ENCODE measurements at regions of chr1 and their contacts with region 1.

Region 1: GRCh38 chr1:22861764-22862440 is 110.8 kb downstream of the LACTBL1 start:
- DNase-seq: peak; percentile 40 to 72 (median 66)
- H3K4me3 ChIP-seq: no peak overlapping the region
- H3K27ac ChIP-seq: no peak overlapping the region
- H3K4me1 ChIP-seq: no peaks in the 10 kb centered on the region
- H3K27me3 ChIP-seq: no peaks in the 10 kb centered on the region
- CTCF ChIP-seq: peak; percentile 69 to 84 (median 74)
- EP300 ChIP-seq: no peak
- POLR2A ChIP-seq: no peak

Region 2: GRCh38 chr1:22709891-22710700 is 151.8 kb before region 1 on chr1:
- intact Hi-C with region 1: loop called in 3 of 4 experiments (anchors 2 to 5 kb)
- DNase-seq: peak; percentile 77 to 84 (median 80)
- H3K4me3 ChIP-seq: peak overlapping the region; percentile 33
- H3K27ac ChIP-seq: no peak overlapping the region
- H3K4me1 ChIP-seq: peaks cover 9% of the 10 kb centered on the region
- H3K27me3 ChIP-seq: no peaks in the 10 kb centered on the region
- CTCF ChIP-seq: no peak
- EP300 ChIP-seq: no peak
- POLR2A ChIP-seq: no peak

Region 3: DNA sequence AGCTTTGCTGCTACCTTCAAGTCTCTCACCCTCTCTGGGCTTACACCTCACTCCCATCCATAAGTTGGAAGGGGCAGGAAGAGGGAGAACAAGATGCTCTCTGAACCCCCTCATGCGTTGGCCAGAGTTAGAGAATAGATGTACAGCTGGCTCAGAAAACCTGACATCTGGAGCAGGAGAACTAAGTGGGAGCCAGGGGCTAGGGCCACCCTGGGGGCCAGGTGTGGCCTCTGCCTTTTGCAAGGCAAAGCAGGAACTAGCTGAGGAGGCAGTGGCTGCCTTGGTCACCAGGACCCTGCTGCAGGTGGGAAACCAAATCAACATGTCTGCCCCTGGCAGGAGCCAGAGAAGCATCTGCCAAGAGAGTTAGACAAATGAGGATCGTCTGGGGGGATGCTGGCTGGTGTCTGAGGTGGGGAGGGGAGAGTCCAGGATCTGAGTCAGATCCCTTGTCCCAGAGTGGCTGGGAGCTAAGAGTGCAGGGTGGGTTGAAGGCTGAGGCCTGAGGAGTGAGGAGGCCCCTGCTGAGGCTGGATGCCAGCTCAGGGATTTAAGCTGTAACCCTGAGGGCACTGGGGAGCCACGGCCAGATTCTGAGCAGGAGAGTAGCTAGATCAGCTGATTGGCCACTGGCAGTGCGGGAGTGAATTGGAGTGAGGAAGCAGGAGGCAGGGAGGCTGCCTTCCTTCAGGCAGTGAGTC is 36.3 kb before region 1 on chr1:
- intact Hi-C with region 1: loop called in 1 of 4 experiments (anchors 2 kb)
- DNase-seq: no peak
- H3K4me3 ChIP-seq: no peak overlapping the region
- H3K27ac ChIP-seq: peak overlapping the region; percentile 29 to 35
- H3K4me1 ChIP-seq: peaks cover 12% of the 10 kb centered on the region
- H3K27me3 ChIP-seq: no peaks in the 10 kb centered on the region
- CTCF ChIP-seq: no peak
- EP300 ChIP-seq: no peak
- POLR2A ChIP-seq: no peak

Region 4: GRCh38 chr1:22930235-22930912 is 68.5 kb after region 1 on chr1:
- intact Hi-C with region 1: no loop called
- DNase-seq: peak in 4 of 5 donors; percentile 36 to 56 (median 38)
- H3K4me3 ChIP-seq: no peak overlapping the region
- H3K27ac ChIP-seq: no peak overlapping the region
- H3K4me1 ChIP-seq: no peaks in the 10 kb centered on the region
- H3K27me3 ChIP-seq: no peaks in the 10 kb centered on the region
- CTCF ChIP-seq: peak in 2 of 3 donors; percentile 37 to 49
- EP300 ChIP-seq: no peak
- POLR2A ChIP-seq: no peak

Measured in ovary (tissue), 10 donors.